ENCODE measurements at regions of chr5 and their contacts with region 1.

Region 1: GRCh38 chr5:74919487-74919886 is 53.3 kb upstream of the FAM169A start:
- DNase-seq: no peak

Region 2: GRCh38 chr5:73908395-73908794 is 1011.1 kb before region 1 on chr5:
- intact Hi-C with region 1: loop called (anchors 5 kb)
- DNase-seq: no peak

Region 3: GRCh38 chr5:74673011-74673790 is 246.3 kb before region 1 on chr5:
- intact Hi-C with region 1: loop called (anchors 5 kb)
- DNase-seq: no peak

Region 4: GRCh38 chr5:74766849-74767578 is 152.5 kb before region 1 on chr5 and contains the starts of genes GFM2 and NSA2:
- intact Hi-C with region 1: loop called (anchors 1 kb)
- DNase-seq: peak; percentile 97
- total RNA-seq, gene GFM2: 45.2 TPM
- total RNA-seq, gene NSA2: 34.2 TPM